ENCODE measurements at regions of chr10 and their contacts with region 1.

Region 1: DNA sequence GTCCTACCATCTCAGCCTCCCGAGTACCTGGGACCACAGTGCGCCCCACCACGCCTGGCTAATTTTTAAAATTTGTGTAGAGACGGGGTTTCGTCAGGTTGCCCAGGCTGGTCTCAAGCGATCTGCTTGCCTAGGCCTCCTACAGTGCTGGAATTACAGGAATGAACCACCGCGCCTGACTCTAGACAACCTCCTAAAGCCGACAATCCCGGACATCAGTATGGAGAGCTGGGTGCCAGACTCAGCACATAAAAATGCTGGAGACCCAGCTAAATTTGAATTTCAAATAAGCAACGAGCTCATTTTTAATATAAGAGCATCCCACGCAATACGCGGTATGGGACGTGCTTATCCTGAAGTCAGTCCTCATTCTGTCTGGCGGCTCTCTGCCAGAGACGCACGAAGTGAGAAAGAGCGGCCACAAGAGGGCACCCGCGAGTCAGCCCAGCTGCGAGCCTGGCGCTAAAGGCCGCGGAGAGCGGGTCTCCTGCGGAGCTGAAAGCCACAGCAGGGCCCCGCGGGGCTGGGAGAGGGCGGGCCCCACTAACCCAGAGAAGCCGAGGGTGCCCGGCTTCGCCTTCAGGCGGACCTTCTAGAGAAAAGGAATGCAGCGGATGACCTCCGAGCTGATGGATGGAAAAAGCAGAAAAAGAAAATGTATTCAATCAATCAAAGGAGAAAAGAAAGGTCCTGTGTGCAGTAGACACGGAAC is 7.0 kb downstream of the CALY start:
- DNase-seq: peak; percentile 79
- H3K27ac ChIP-seq: no peak overlapping the region
- CTCF ChIP-seq: peak; percentile 96

Region 2: DNA sequence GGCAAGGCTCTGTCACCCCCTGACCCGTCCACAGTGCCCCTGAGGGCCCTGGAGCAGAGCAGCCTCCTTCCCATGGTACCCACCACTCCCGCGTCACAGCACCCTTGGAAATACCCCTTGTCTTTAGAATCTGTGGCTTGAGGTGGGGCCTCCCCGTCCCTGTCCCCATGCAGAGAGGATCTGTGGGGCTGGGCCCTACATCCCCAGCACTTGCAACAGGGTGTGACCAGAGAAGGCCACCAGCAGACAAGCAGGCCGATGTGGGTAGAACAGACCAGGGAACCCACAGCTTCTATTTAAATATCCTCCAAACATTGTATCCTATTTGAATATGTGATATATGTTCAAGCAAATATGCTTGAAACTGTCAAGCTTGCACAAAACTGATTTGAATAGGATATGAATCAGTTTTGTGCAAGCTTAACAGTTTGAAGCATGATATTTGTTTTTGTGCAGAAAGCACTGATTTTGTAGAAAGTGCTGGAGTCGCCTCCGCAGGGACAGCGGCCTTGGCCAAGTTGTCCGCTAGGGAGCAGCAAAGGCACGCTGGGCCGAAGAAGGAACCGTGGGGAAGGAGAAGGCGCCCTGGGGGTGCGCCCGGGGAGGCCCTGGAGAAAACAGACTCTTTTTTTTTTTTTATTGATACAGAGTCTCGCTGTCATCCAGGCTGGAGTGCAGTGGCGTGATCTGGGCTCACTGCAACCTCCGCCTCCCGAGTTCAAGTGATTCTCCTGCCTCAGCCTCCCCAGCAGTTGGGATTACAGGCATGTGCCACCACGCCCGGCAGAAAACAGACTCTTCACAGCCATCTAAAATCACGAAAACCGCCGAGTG is 389.5 kb before region 1 on chr10:
- CTCF ChIA-PET with region 1: no interaction called
- POLR2A ChIA-PET with region 1: no interaction called
- DNase-seq: peak; percentile 50
- H3K27ac ChIP-seq: no peak overlapping the region
- CTCF ChIP-seq: peak; percentile 29

Region 3: GRCh38 chr10:133318494-133319127 is 11.0 kb before region 1 on chr10:
- CTCF ChIA-PET with region 1: interaction called, 12 read pairs
- POLR2A ChIA-PET with region 1: no interaction called
- DNase-seq: no peak
- H3K27ac ChIP-seq: no peak overlapping the region
- CTCF ChIP-seq: peak; percentile 58

Region 4: GRCh38 chr10:133339708-133340380 is 10.2 kb after region 1 on chr10:
- CTCF ChIA-PET with region 1: interaction called, 13 read pairs
- POLR2A ChIA-PET with region 1: no interaction called
- DNase-seq: no peak
- H3K27ac ChIP-seq: no peak overlapping the region
- CTCF ChIP-seq: no peak

Region 5: DNA sequence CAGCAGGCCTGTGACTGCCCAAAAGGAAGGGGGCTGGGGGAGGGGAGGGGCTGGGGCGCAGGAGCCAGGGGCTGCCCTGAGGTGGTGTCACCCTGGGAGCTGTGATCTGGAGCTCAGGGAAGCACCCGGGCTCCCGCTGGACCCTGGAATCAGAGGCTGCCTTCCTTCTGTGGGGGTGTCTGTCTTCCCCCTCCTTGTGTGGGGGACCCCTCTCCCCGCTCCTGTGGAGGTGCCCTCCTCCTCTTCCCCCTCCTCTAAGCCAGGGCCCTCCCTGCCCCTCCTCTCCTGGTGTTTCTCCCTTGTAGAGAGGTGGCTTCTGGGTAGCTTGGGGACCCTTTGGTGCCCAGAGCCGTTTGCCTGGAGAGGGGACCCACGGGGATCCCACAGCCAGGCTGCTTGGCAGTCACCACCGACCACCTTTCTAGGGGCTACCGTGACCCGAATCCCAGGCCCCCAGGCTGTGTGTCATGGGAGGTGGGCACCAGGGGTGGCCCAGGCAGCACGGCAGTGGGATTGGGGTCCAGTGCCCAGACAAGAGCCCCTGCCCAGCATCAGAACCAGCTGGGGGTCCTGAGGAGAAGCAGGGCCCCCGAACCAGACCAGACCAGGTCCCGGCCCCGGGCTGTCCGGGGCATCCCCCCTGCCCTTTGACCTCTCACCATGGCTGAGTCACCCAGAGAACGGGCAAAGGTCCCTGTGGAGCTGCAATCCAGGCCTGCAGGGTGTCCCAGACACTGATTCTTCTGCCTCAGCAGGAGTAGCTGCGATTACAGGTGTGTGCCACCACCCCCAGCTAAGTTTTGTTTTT is 18.3 kb after region 1 on chr10:
- CTCF ChIA-PET with region 1: interaction called, 11 read pairs
- POLR2A ChIA-PET with region 1: no interaction called
- DNase-seq: no peak
- H3K27ac ChIP-seq: no peak overlapping the region
- CTCF ChIP-seq: no peak

Region 6: GRCh38 chr10:133356549-133357284 is 27.1 kb after region 1 on chr10:
- CTCF ChIA-PET with region 1: interaction called, 13 read pairs
- POLR2A ChIA-PET with region 1: no interaction called
- DNase-seq: no peak
- H3K27ac ChIP-seq: peak overlapping the region; percentile 54
- CTCF ChIP-seq: no peak

Region 7: DNA sequence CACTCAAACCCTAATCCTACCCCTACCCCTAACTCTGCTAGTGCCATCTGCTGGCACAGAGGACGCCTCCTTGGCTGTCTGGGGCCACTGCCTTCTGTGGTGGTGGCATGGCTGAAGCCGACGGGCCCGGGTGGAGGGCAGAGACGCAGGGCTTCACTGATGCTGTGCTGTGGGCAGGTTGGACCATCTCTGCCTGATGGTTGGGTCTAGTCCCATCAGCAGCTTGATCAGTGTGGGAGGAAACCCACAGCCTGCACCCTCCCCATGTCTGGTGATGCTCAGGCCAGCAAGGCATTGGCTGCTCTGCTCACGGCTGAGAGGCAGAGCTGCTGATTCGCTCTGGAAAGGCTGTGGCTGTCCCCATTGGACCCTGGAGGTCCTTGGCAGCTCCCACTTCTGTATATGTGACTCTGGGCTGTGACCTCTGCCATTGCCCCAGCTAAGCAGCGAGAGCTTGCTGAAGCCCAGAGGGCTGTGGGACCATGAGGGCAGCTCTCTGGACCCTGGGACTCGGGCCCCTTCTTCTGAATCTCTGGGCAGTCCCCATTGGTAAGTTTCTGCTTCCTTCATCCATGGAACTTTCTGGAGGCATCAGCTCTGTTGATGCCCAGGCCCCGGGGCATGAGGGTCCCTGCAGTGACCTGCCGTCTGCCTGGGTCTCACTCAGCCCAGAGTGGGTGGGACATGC is 124.0 kb after region 1 on chr10 and contains the start of gene SCART1:
- CTCF ChIA-PET with region 1: no interaction called
- POLR2A ChIA-PET with region 1: no interaction called
- DNase-seq: no peak
- H3K27ac ChIP-seq: no peak within 1 kb of the TSS
- CTCF ChIP-seq: no peak